ENCODE measurements at regions of chr17 and their contacts with region 1.

Region 1: GRCh38 chr17:75904749-75905521 is at the start of gene MRPL38:
- DNase-seq: peak; percentile 99
- H3K4me3 ChIP-seq: peak within 1 kb of the TSS; percentile 70 to 88
- H3K27ac ChIP-seq: peak within 1 kb of the TSS; percentile 66 to 86
- H3K4me1 ChIP-seq: peaks cover 4 to 13% of the 10 kb centered on the region in 2 experiments; a peak in 2 of 4 replicates
- H3K27me3 ChIP-seq: no peaks in the 10 kb centered on the region
- CTCF ChIP-seq: peak; percentile 99
- EP300 ChIP-seq: peak in 1 of 2 experiments; percentile 56; a peak in 1 of 4 replicates
- RAD21 ChIP-seq: peak; percentile 94
- polyA plus RNA-seq, gene MRPL38: 62.5 and 93.9 TPM in 2 replicates

Region 2: DNA sequence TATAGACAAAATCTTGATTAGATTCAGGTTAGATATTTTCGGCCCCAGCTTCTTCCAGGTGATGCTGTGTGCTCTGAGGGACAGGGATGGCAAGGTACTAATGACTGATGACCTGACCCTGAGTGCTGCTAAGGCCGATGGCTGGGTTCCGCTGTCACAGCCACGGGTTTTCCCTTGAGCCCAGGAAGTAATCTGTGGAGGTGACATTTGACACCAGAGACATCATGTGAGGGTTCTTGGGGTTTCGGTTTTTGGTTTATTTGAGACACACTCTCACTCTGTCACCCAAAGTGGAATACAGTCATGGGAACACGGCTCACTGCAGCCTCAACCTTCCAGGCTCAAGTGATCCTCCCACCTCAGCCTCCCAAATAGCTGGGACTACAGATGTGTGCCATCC is 959.4 kb before region 1 on chr17:
- CTCF ChIA-PET with region 1: no interaction called
- POLR2A ChIA-PET with region 1: no interaction called
- DNase-seq: no peak
- H3K4me3 ChIP-seq: no peak overlapping the region
- H3K27ac ChIP-seq: no peak overlapping the region
- H3K4me1 ChIP-seq: no peaks in the 10 kb centered on the region
- H3K27me3 ChIP-seq: peaks cover 80% of the 10 kb centered on the region
- CTCF ChIP-seq: no peak
- EP300 ChIP-seq: no peak
- RAD21 ChIP-seq: no peak

Region 3: GRCh38 chr17:75808905-75809715 is 95.8 kb before region 1 on chr17:
- CTCF ChIA-PET with region 1: no interaction called
- POLR2A ChIA-PET with region 1: no interaction called
- DNase-seq: peak; percentile 27
- H3K4me3 ChIP-seq: no peak overlapping the region
- H3K27ac ChIP-seq: peak overlapping the region in 1 of 2 experiments; percentile 30; a peak in 1 of 4 replicates
- H3K4me1 ChIP-seq: peaks cover 0 to 6% of the 10 kb centered on the region in 2 experiments; a peak in 1 of 4 replicates
- H3K27me3 ChIP-seq: no peaks in the 10 kb centered on the region
- CTCF ChIP-seq: no peak
- EP300 ChIP-seq: no peak
- RAD21 ChIP-seq: no peak

Region 4: GRCh38 chr17:75855310-75856081 is 49.4 kb before region 1 on chr17 and contains the start of gene WBP2:
- CTCF ChIA-PET with region 1: interaction called, 13 read pairs
- POLR2A ChIA-PET with region 1: interaction called, 4 read pairs
- DNase-seq: peak; percentile 97
- H3K4me3 ChIP-seq: peak within 1 kb of the TSS; percentile 72 to 83
- H3K27ac ChIP-seq: peak within 1 kb of the TSS; percentile 86 to 88
- H3K4me1 ChIP-seq: peaks cover 12 to 19% of the 10 kb centered on the region in 2 experiments; a peak in 3 of 4 replicates
- H3K27me3 ChIP-seq: no peaks in the 10 kb centered on the region
- CTCF ChIP-seq: peak; percentile 70
- EP300 ChIP-seq: no peak
- RAD21 ChIP-seq: no peak; the same call in none of the 2 replicates
- polyA plus RNA-seq, gene WBP2: 49.7 and 55.8 TPM in 2 replicates

Region 5: DNA sequence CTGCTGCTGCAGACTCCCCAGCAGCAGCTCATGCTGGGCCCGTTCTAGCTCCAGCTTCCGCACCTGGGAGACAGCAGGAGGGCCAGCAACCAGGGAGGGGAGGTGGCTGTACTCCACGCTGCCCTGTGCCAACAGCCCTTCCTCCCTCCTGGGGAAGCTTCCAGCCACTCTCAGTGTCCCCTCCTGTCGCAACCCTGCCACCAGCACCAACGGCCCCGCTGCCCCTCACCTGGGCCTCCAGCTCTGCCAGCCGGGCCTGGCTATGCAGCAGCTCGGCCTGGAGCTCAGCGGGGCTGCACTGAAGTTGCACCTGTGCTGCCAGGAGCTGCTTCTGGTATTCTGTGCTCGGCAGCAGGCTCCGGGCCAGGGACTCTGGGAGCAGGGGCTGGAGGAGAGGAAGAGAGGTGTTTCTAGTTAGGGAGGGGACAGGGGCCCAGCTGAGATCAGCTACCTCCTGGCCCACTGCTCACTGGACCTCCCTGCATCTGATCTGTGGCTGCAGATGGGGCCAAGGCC is 15.2 kb after region 1 on chr17:
- CTCF ChIA-PET with region 1: interaction called, 28 read pairs
- POLR2A ChIA-PET with region 1: interaction called, 4 read pairs
- DNase-seq: no peak
- H3K4me3 ChIP-seq: no peak overlapping the region
- H3K27ac ChIP-seq: no peak overlapping the region
- H3K4me1 ChIP-seq: no peaks in the 10 kb centered on the region
- H3K27me3 ChIP-seq: no peaks in the 10 kb centered on the region
- CTCF ChIP-seq: no peak
- EP300 ChIP-seq: no peak
- RAD21 ChIP-seq: no peak

Region 6: DNA sequence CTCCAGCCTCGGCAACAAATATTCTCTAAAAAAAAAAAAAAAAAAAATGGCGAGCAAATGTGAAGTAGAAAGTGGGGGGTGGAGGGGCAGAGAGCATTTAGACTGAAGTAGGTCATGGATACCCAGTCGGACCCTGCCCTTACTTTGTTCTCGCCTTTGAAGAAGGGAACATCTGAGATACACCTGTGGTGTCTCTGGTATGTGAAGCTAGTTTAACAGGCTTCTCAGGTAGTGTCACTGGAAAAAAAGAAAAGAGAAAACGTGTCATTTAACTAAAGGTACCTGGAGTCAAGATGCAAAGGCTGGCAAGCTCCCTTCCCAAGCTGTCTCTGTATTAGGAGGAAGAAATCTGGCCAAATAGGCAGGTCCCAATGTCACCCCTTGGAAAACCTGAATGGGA is 27.9 kb after region 1 on chr17:
- CTCF ChIA-PET with region 1: interaction called, 26 read pairs
- POLR2A ChIA-PET with region 1: no interaction called
- DNase-seq: no peak
- H3K4me3 ChIP-seq: no peak overlapping the region
- H3K27ac ChIP-seq: no peak overlapping the region
- H3K4me1 ChIP-seq: no peaks in the 10 kb centered on the region
- H3K27me3 ChIP-seq: no peaks in the 10 kb centered on the region
- CTCF ChIP-seq: no peak
- EP300 ChIP-seq: no peak
- RAD21 ChIP-seq: no peak

Region 7: GRCh38 chr17:76000016-76000754 is 95.2 kb after region 1 on chr17:
- CTCF ChIA-PET with region 1: interaction called, 142 read pairs
- POLR2A ChIA-PET with region 1: interaction called, 7 read pairs
- DNase-seq: peak; percentile 98
- H3K4me3 ChIP-seq: no peak overlapping the region; a peak in 1 of 4 replicates
- H3K27ac ChIP-seq: no peak overlapping the region; a peak in 1 of 4 replicates
- H3K4me1 ChIP-seq: peaks cover 0 to 13% of the 10 kb centered on the region in 2 experiments; a peak in 2 of 4 replicates
- H3K27me3 ChIP-seq: no peaks in the 10 kb centered on the region
- CTCF ChIP-seq: peak; percentile 94
- EP300 ChIP-seq: peak in 1 of 2 experiments; percentile 31; a peak in 1 of 4 replicates
- RAD21 ChIP-seq: peak; percentile 72